Naive thymus-derived CD4-positive, alpha-beta T cell (primary cell): ENCODE measurements at regions of chr9 and their contacts with region 1.

Region 1: DNA sequence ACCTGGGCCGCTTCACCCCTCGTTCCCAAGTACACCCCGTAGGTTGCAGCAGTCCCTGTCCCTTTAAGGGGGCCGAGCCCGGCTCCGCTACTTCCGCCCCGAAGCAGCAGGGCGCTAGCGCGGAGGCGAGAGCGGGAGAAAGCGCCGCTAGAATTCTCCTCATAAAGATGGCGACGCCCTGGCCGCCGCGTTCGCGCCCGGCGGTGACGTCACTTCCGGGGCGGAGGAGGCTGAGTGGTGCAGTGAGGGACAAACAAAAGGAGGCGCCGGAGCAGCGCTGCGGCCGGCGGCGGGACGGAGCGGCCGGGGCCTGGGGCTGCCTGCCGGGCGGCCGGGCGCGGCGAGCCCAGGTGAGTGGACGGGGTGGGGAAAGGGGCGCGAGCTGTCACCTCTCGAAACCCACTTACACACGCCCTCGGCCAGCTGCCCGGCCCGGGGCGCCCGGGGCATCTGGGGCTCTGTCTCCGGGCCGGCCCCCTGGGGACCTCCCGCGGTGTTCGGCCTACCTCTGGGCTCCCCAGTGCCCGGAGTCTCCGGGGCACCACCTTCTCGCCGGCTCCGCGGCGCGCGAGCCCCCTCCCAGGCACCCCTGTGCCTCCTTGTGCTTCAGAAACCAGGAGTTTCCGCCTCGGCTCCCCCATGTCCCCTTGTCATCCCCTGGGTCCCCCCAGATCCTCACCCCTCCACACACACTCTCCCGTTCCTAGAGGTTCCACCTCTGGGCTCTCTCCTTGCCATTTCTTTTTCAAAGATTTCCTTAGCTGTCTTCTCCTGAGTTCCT is at the starts of genes KYAT1 and LRRC8A:
- DNase-seq: peak; percentile 95 to 99 (median 97)
- ATAC-seq: peak; percentile 95
- H3K4me3 ChIP-seq: peak within 1 kb of the TSS; percentile 94
- H3K4me3 Mint-ChIP-seq: peak within 1 kb of the TSS; percentile 97 to 99 (median 98)
- H3K27ac ChIP-seq: peak within 1 kb of the TSS; percentile 95
- H3K27ac Mint-ChIP-seq: peak within 1 kb of the TSS; percentile 94 to 99 (median 97)
- H3K4me1 ChIP-seq: peaks cover 24 to 25% of the 10 kb centered on the region in 2 donors
- H3K4me1 Mint-ChIP-seq: peaks cover 45 to 79% (median 61%) of the 10 kb centered on the region in 7 donors
- H3K27me3 ChIP-seq: no peaks in the 10 kb centered on the region
- H3K27me3 Mint-ChIP-seq: no peaks in the 10 kb centered on the region
- total RNA-seq, gene KYAT1: 7.2 to 18.2 (median 14.8) TPM
- total RNA-seq, gene LRRC8A: 31.3 to 48.8 (median 34.5) TPM

Region 2: GRCh38 chr9:128136816-128137793 is 745.0 kb before region 1 on chr9:
- CTCF ChIA-PET with region 1: no interaction called
- POLR2A ChIA-PET with region 1: no interaction called
- intact Hi-C with region 1: no loop called
- DNase-seq: no peak
- ATAC-seq: no peak
- H3K4me3 ChIP-seq: no peak overlapping the region
- H3K4me3 Mint-ChIP-seq: peak overlapping the region in 1 of 10 donors; percentile 27
- H3K27ac ChIP-seq: no peak overlapping the region
- H3K27ac Mint-ChIP-seq: no peak overlapping the region
- H3K4me1 ChIP-seq: peaks cover 0 to 7% of the 10 kb centered on the region in 2 donors
- H3K4me1 Mint-ChIP-seq: peaks cover 9 to 26% (median 12%) of the 10 kb centered on the region in 7 donors
- H3K27me3 ChIP-seq: no peaks in the 10 kb centered on the region
- H3K27me3 Mint-ChIP-seq: peaks cover 0 to 37% (median 8%) of the 10 kb centered on the region in 5 donors

Region 3: DNA sequence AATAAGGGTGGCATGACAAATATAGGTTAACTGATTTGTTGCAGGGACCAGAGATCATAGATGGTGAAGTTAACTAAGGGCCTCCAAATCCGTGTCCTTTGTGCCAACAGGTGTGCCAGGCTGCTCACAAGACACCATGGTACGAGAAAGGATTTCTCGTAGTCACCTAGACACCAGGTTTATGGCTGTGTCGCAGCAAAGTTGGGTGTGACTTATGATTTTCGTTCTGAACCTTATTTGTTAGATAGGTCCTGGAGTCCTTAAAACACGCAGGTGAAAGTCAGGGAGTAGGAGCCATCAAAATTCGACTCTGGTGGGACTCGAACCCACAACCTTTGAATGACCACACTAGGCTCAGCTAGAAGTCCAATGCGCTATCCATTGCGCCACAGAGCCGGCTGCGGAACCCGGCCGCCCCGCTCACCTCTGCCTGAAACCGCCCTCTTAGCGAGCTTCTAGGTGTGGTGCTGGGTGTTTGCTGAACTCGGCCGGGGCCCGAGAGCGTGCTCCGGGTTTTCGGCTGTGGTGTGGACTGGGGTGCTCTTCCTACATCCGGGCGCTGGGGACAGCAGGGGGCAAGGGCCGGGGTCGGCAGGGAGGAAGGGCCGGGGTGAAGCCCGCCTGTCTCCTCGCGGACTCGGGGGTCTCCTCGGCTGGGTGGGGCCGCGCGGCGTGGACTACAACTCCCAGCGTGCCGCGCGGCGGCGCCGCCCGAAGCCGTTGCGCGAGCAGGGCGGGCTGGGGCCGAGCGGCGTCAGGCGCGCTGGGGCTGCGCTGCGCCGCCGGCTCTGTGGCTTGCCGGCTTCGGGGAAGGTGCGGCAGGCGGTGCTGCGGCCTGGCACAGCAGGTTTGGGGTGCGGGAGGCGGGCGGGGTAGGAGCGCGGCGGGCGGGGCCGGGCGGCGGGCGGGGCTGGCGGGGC is 542.1 kb before region 1 on chr9 and contains the start of gene SLC27A4:
- CTCF ChIA-PET with region 1: no interaction called
- POLR2A ChIA-PET with region 1: no interaction called
- intact Hi-C with region 1: loop called in 1 of 2 experiments (anchors 5 kb)
- DNase-seq: peak; percentile 75 to 86 (median 82)
- ATAC-seq: peak; percentile 96
- H3K4me3 ChIP-seq: peak within 1 kb of the TSS; percentile 66
- H3K4me3 Mint-ChIP-seq: peak within 1 kb of the TSS; percentile 87 to 98 (median 95)
- H3K27ac ChIP-seq: peak within 1 kb of the TSS; percentile 69
- H3K27ac Mint-ChIP-seq: peak within 1 kb of the TSS; percentile 70 to 93 (median 90)
- H3K4me1 ChIP-seq: peaks cover 4 to 12% of the 10 kb centered on the region in 2 donors
- H3K4me1 Mint-ChIP-seq: peaks cover 6 to 11% (median 9%) of the 10 kb centered on the region in 7 donors
- H3K27me3 ChIP-seq: no peaks in the 10 kb centered on the region
- H3K27me3 Mint-ChIP-seq: no peaks in the 10 kb centered on the region
- total RNA-seq, gene SLC27A4: 6.4 to 20.1 (median 12.1) TPM

Region 4: GRCh38 chr9:128771745-128772519 is 110.2 kb before region 1 on chr9 and contains the start of gene ZER1:
- CTCF ChIA-PET with region 1: no interaction called
- POLR2A ChIA-PET with region 1: no interaction called
- intact Hi-C with region 1: loop called (anchors 1 to 2 kb)
- DNase-seq: peak; percentile 92 to 98 (median 95)
- ATAC-seq: peak; percentile 97
- H3K4me3 ChIP-seq: peak within 1 kb of the TSS; percentile 97
- H3K4me3 Mint-ChIP-seq: peak within 1 kb of the TSS; percentile 95 to 99 (median 98)
- H3K27ac ChIP-seq: peak within 1 kb of the TSS; percentile 93
- H3K27ac Mint-ChIP-seq: peak within 1 kb of the TSS; percentile 93 to 100 (median 100)
- H3K4me1 ChIP-seq: peaks cover 7 to 12% of the 10 kb centered on the region in 2 donors
- H3K4me1 Mint-ChIP-seq: peaks cover 21 to 40% (median 39%) of the 10 kb centered on the region in 7 donors
- H3K27me3 ChIP-seq: no peaks in the 10 kb centered on the region
- H3K27me3 Mint-ChIP-seq: no peaks in the 10 kb centered on the region
- total RNA-seq, gene ZER1: 22.7 to 51.2 (median 34.7) TPM

Region 5: DNA sequence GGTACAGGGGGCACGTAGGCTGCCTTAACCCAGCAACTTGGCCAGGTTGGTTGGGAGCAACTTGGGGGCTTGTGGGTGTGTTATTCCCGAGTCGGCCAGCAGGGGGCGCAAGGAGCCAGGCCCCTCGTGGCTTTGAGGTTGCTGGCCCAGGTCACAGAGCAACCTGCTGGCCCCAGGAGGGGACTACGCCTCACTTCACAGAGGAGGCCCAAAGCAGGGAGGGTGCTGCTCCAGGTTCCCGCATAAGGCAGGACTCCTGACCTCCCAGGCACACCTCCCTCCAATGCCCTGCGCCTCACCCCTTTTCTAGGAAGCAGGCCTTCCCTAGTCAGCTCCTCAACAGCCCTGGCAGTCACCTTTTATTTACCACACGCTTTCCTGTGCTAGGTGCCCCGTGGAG is 18.4 kb before region 1 on chr9:
- CTCF ChIA-PET with region 1: interaction called, 7 read pairs
- POLR2A ChIA-PET with region 1: interaction called, 9 read pairs
- intact Hi-C with region 1: loop called in 1 of 2 experiments (anchors 1 kb)
- DNase-seq: peak; percentile 69 to 89 (median 79)
- ATAC-seq: peak; percentile 99
- H3K4me3 ChIP-seq: no peak overlapping the region
- H3K4me3 Mint-ChIP-seq: no peak overlapping the region
- H3K27ac ChIP-seq: no peak overlapping the region
- H3K27ac Mint-ChIP-seq: peak overlapping the region; percentile 11 to 78 (median 55)
- H3K4me1 ChIP-seq: peaks cover 3 to 7% of the 10 kb centered on the region in 2 donors
- H3K4me1 Mint-ChIP-seq: peaks cover 0 to 10% (median 6%) of the 10 kb centered on the region in 7 donors
- H3K27me3 ChIP-seq: no peaks in the 10 kb centered on the region
- H3K27me3 Mint-ChIP-seq: no peaks in the 10 kb centered on the region

Region 6: GRCh38 chr9:128927731-128928411 is 45.8 kb after region 1 on chr9:
- CTCF ChIA-PET with region 1: interaction called, 14 read pairs
- POLR2A ChIA-PET with region 1: interaction called, 4 read pairs
- intact Hi-C with region 1: loop called (anchors 1 to 5 kb)
- DNase-seq: peak; percentile 24 to 69 (median 46)
- ATAC-seq: peak; percentile 77
- H3K4me3 ChIP-seq: no peak overlapping the region
- H3K4me3 Mint-ChIP-seq: peak overlapping the region in 3 of 10 donors; percentile 11 to 47 (median 39)
- H3K27ac ChIP-seq: no peak overlapping the region
- H3K27ac Mint-ChIP-seq: peak overlapping the region in 8 of 9 donors; percentile 1 to 76 (median 50)
- H3K4me1 ChIP-seq: peaks cover 3 to 6% of the 10 kb centered on the region in 2 donors
- H3K4me1 Mint-ChIP-seq: peaks cover 12 to 22% (median 19%) of the 10 kb centered on the region in 7 donors
- H3K27me3 ChIP-seq: no peaks in the 10 kb centered on the region
- H3K27me3 Mint-ChIP-seq: peaks cover 0 to 3% (median 0%) of the 10 kb centered on the region in 5 donors

Region 7: GRCh38 chr9:129080602-129081387 is 198.7 kb after region 1 on chr9 and contains the start of gene DOLPP1:
- CTCF ChIA-PET with region 1: no interaction called
- POLR2A ChIA-PET with region 1: no interaction called
- intact Hi-C with region 1: loop called in 1 of 2 experiments (anchors 1 kb)
- DNase-seq: peak; percentile 96 to 99 (median 99)
- ATAC-seq: peak; percentile 97
- H3K4me3 ChIP-seq: peak within 1 kb of the TSS; percentile 82
- H3K4me3 Mint-ChIP-seq: peak within 1 kb of the TSS; percentile 88 to 94 (median 90)
- H3K27ac ChIP-seq: peak within 1 kb of the TSS; percentile 79
- H3K27ac Mint-ChIP-seq: peak within 1 kb of the TSS; percentile 69 to 93 (median 87)
- H3K4me1 ChIP-seq: peaks cover 19 to 20% of the 10 kb centered on the region in 2 donors
- H3K4me1 Mint-ChIP-seq: peaks cover 6 to 41% (median 26%) of the 10 kb centered on the region in 7 donors
- H3K27me3 ChIP-seq: no peaks in the 10 kb centered on the region
- H3K27me3 Mint-ChIP-seq: no peaks in the 10 kb centered on the region
- total RNA-seq, gene DOLPP1: 5.7 to 17.1 (median 11.9) TPM

Region 8: GRCh38 chr9:130834371-130835311 is 1952.5 kb after region 1 on chr9 and contains the start of gene ABL1:
- CTCF ChIA-PET with region 1: no interaction called
- POLR2A ChIA-PET with region 1: no interaction called
- intact Hi-C with region 1: no loop called
- DNase-seq: peak; percentile 37 to 66 (median 52)
- ATAC-seq: peak; percentile 89
- H3K4me3 ChIP-seq: peak within 1 kb of the TSS; percentile 79
- H3K4me3 Mint-ChIP-seq: peak within 1 kb of the TSS; percentile 92 to 99 (median 96)
- H3K27ac ChIP-seq: peak within 1 kb of the TSS; percentile 27
- H3K27ac Mint-ChIP-seq: peak within 1 kb of the TSS; percentile 79 to 96 (median 92)
- H3K4me1 ChIP-seq: peaks cover 0 to 19% of the 10 kb centered on the region in 2 donors
- H3K4me1 Mint-ChIP-seq: peaks cover 20 to 62% (median 51%) of the 10 kb centered on the region in 7 donors
- H3K27me3 ChIP-seq: no peaks in the 10 kb centered on the region
- H3K27me3 Mint-ChIP-seq: peaks cover 0 to 37% (median 0%) of the 10 kb centered on the region in 5 donors
- total RNA-seq, gene ABL1: 32.1 to 41.0 (median 39.5) TPM